ENCODE measurements at regions of chr7 and their contacts with region 1.

Region 1: DNA sequence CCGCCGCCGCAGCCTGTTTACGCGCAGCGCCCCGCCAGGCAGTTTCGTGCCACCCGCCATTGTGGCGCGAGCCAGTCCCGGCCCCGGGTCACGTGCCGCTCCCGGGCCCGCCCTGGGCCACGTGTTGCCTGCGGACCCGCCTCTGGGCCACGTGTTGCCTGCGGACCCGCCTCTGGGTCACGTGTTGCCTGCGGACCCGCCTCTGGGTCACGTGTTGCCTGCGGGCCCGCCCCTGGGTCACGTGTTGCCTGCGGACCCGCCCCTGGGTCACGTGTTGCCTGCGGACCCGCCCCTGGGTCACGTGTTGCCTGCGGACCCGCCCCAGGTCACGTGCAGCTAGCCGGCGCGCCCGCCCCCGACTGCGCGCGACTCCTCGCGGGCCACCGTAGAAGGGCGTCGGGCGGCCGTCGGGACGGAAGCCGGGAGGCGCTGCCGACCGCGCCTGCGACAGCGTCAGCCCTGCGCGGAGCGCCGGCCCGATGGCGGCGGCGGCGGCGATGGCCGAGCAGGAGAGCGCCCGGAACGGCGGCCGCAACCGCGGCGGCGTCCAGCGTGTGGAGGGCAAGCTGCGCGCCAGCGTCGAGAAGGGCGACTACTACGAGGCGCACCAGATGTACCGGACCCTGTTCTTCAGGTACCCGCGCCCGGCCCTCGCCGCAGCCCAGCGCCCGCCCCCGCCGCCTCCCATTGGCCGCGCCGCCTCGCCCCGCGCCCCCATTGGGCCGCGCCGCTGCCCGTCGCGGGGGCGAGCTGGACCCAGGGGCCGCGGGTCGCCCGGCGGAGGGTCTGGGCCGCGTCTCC is at the start of gene GET4:
- DNase-seq: peak; percentile 95 to 98 (median 96)
- ATAC-seq: peak; percentile 79
- H3K4me3 ChIP-seq: peak within 1 kb of the TSS; percentile 74 to 84
- H3K4me3 Mint-ChIP-seq: peak within 1 kb of the TSS; percentile 90
- H3K27ac ChIP-seq: peak within 1 kb of the TSS; percentile 72 to 89
- H3K27ac Mint-ChIP-seq: peak within 1 kb of the TSS; percentile 89
- H3K4me1 ChIP-seq: peaks cover 25% of the 10 kb centered on the region
- H3K4me1 Mint-ChIP-seq: peaks cover 34% of the 10 kb centered on the region
- H3K27me3 ChIP-seq: no peaks in the 10 kb centered on the region
- H3K27me3 Mint-ChIP-seq: no peaks in the 10 kb centered on the region
- CTCF ChIP-seq: no peak
- total RNA-seq, gene GET4: 75.4 to 83.1 TPM

Region 2: DNA sequence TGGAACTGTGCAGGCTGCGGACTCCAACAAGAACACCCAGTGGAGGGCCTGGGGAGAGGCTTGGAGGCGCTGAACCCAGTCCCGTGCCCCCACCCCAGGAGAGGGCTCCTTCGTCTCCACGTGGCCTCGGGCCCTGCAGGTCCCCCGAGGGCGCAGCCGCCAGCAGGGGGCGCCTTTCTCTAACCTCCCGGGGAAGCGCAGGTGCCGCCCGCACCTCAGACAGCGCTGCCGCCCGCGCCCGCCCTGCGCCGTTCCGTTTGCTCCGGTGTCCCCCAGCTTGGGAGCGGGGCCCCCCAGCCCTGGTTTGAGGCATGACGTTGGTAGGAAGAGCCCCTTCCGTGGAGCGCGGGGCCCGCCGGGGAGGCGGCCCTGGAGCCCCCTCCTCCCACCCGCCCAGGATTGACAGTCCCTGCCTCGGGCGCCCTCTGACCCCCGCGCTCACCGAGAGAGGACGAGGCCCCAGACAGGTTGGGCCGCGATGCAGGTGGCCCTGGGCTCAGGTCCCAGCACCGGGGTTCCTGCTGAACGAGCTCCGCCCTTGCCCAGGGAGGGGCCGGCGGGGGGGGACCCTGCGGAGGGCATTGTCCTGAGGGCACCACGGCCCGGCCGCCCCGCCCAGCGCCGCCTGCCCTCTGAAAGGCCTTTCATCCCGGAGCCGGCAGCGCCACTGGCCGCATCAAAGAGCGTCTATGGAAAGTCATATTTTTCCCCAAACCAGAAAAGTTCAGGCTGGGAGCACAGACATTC is 543.5 kb before region 1 on chr7:
- CTCF ChIA-PET with region 1: interaction called, 4 read pairs
- POLR2A ChIA-PET with region 1: no interaction called
- intact Hi-C with region 1: loop called in 1 of 2 experiments (anchors 1 kb)
- DNase-seq: peak; percentile 76 to 98 (median 88)
- ATAC-seq: peak; percentile 92
- H3K4me3 ChIP-seq: peak overlapping the region; percentile 34 to 52
- H3K4me3 Mint-ChIP-seq: peak overlapping the region; percentile 22
- H3K27ac ChIP-seq: no peak overlapping the region
- H3K27ac Mint-ChIP-seq: no peak overlapping the region
- H3K4me1 ChIP-seq: peaks cover 18% of the 10 kb centered on the region
- H3K4me1 Mint-ChIP-seq: peaks cover 11% of the 10 kb centered on the region
- H3K27me3 ChIP-seq: no peaks in the 10 kb centered on the region
- H3K27me3 Mint-ChIP-seq: no peaks in the 10 kb centered on the region
- CTCF ChIP-seq: peak; percentile 69

Region 3: GRCh38 chr7:726084-726853 is 150.1 kb before region 1 on chr7 and contains the start of gene DNAAF5:
- CTCF ChIA-PET with region 1: no interaction called
- POLR2A ChIA-PET with region 1: no interaction called
- intact Hi-C with region 1: loop called (anchors 1 kb)
- DNase-seq: peak; percentile 69 to 91 (median 86)
- ATAC-seq: peak; percentile 87
- H3K4me3 ChIP-seq: peak within 1 kb of the TSS; percentile 65 to 77
- H3K4me3 Mint-ChIP-seq: peak within 1 kb of the TSS; percentile 79
- H3K27ac ChIP-seq: peak within 1 kb of the TSS; percentile 65 to 67
- H3K27ac Mint-ChIP-seq: peak within 1 kb of the TSS; percentile 75
- H3K4me1 ChIP-seq: peaks cover 14% of the 10 kb centered on the region
- H3K4me1 Mint-ChIP-seq: peaks cover 17% of the 10 kb centered on the region
- H3K27me3 ChIP-seq: no peaks in the 10 kb centered on the region
- H3K27me3 Mint-ChIP-seq: no peaks in the 10 kb centered on the region
- CTCF ChIP-seq: no peak
- total RNA-seq, gene DNAAF5: 4.3 to 4.9 TPM

Region 4: GRCh38 chr7:831596-832166 is 44.7 kb before region 1 on chr7:
- CTCF ChIA-PET with region 1: interaction called, 3 read pairs
- POLR2A ChIA-PET with region 1: no interaction called
- intact Hi-C with region 1: loop called in 1 of 2 experiments (anchors 5 kb)
- DNase-seq: peak in 3 of 9 experiments; percentile 23 to 61 (median 30)
- ATAC-seq: peak; percentile 15
- H3K4me3 ChIP-seq: no peak overlapping the region
- H3K4me3 Mint-ChIP-seq: peak overlapping the region; percentile 75
- H3K27ac ChIP-seq: peak overlapping the region; percentile 66 to 75
- H3K27ac Mint-ChIP-seq: peak overlapping the region; percentile 92
- H3K4me1 ChIP-seq: peaks cover 27% of the 10 kb centered on the region
- H3K4me1 Mint-ChIP-seq: peaks cover 48% of the 10 kb centered on the region
- H3K27me3 ChIP-seq: no peaks in the 10 kb centered on the region
- H3K27me3 Mint-ChIP-seq: no peaks in the 10 kb centered on the region
- CTCF ChIP-seq: no peak

Region 5: DNA sequence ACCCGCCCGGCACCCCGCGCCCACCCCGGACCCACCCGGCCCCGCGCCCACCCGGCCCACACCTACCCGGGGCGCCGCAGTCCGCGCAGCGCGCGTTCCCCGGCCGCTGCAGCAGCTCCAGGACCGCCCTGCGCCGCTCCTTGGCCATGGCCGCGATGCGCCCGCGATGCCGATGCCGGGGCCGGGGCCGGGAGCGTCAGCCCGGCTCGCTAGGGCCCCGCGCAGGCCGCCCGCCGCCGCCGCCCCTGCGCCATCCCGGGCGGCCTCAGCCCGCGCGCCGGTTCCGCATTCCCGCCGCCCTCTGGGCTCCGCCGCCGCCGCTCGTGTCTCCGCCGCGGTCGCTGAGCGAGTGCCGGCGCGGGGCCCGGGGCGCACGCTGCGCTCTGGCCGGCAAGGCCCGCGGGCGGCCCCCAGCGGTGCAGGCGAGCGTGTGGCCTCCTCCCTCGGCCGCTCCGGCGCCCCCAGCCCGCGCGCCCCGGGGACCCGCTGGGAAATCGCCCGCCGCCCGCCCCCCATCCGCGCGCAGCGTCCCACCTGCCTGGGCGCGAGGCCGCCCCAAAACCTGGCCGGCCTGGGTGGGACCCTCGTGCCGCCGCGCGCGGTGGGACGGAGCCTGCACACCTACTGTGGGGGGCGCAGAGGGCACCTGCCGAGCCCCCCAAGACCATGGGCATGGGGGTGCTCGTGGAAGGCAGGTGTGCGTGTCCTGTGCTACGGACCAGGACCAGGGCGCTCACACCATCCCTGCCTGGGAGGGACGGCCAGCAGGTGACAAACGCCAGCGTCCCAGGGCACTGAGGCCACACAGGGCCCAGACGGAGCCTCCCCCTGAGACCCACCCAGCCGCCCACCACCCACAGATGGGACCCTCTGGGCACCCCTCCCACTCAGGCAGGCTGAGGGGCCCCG is 78.2 kb after region 1 on chr7 and contains the start of gene ADAP1:
- CTCF ChIA-PET with region 1: interaction called, 5 read pairs
- POLR2A ChIA-PET with region 1: interaction called, 4 read pairs
- intact Hi-C with region 1: loop called (anchors 1 to 2 kb)
- DNase-seq: peak in 8 of 9 experiments; percentile 45 to 87 (median 60)
- ATAC-seq: peak; percentile 83
- H3K4me3 ChIP-seq: peak within 1 kb of the TSS in 1 of 2 experiments; percentile 45
- H3K4me3 Mint-ChIP-seq: peak within 1 kb of the TSS; percentile 70
- H3K27ac ChIP-seq: no peak within 1 kb of the TSS
- H3K27ac Mint-ChIP-seq: peak within 1 kb of the TSS; percentile 70
- H3K4me1 ChIP-seq: no peaks in the 10 kb centered on the region
- H3K4me1 Mint-ChIP-seq: peaks cover 9% of the 10 kb centered on the region
- H3K27me3 ChIP-seq: no peaks in the 10 kb centered on the region
- H3K27me3 Mint-ChIP-seq: no peaks in the 10 kb centered on the region
- CTCF ChIP-seq: no peak
- total RNA-seq, gene ADAP1: 10.9 to 11.5 TPM

Region 6: GRCh38 chr7:1137510-1138167 is 261.3 kb after region 1 on chr7:
- CTCF ChIA-PET with region 1: no interaction called
- POLR2A ChIA-PET with region 1: no interaction called
- intact Hi-C with region 1: loop called in 1 of 2 experiments (anchors 1 kb)
- DNase-seq: no peak
- ATAC-seq: peak; percentile 62
- H3K4me3 ChIP-seq: peak overlapping the region; percentile 77 to 78
- H3K4me3 Mint-ChIP-seq: peak overlapping the region; percentile 90
- H3K27ac ChIP-seq: peak overlapping the region; percentile 81 to 91
- H3K27ac Mint-ChIP-seq: peak overlapping the region; percentile 88
- H3K4me1 ChIP-seq: peaks cover 14% of the 10 kb centered on the region
- H3K4me1 Mint-ChIP-seq: peaks cover 17% of the 10 kb centered on the region
- H3K27me3 ChIP-seq: no peaks in the 10 kb centered on the region
- H3K27me3 Mint-ChIP-seq: no peaks in the 10 kb centered on the region
- CTCF ChIP-seq: no peak

Region 7: DNA sequence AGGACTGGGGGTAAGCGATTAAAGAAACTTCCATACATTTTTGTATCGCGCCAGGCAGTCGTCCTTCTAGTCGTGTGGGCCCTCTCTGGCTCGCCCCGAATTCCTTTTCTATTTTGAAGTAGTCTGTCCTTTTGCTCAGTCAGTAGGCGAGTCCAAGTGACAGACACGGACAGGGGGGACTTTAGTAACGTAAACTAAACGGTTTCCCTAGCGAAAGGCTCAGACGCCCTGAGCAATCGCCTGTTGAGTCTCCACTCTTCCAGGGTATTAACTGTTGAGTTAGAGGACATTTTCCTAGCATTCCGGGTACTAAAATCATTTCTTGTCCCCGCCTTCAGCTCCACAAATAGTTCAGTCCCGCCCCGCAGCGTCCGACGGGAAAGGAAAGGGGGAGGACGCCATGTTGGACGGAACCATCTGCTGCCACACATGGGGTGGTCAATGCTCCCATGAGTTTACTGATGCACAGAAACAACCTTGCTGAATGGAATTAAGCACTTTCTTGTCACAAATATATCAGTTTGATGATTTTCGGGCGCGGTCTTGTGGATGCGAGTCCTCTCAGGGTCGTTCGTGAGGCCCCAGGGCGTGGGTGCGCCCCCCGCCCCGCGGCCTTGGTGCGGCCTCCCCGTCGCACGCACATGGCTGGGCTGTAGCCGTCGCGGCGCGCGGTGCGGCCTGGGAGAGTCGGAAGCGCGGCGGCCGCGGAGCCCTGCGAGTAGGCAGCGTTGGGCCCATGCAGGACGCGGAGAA is 1478.0 kb after region 1 on chr7 and contains the start of gene EIF3B:
- CTCF ChIA-PET with region 1: no interaction called
- POLR2A ChIA-PET with region 1: no interaction called
- intact Hi-C with region 1: loop called in 1 of 2 experiments (anchors 5 kb)
- DNase-seq: peak; percentile 80 to 97 (median 90)
- ATAC-seq: peak; percentile 84
- H3K4me3 ChIP-seq: peak within 1 kb of the TSS; percentile 72 to 74
- H3K4me3 Mint-ChIP-seq: peak within 1 kb of the TSS; percentile 88
- H3K27ac ChIP-seq: peak within 1 kb of the TSS; percentile 99
- H3K27ac Mint-ChIP-seq: peak within 1 kb of the TSS; percentile 99
- H3K4me1 ChIP-seq: peaks cover 45% of the 10 kb centered on the region
- H3K4me1 Mint-ChIP-seq: peaks cover 40% of the 10 kb centered on the region
- H3K27me3 ChIP-seq: no peaks in the 10 kb centered on the region
- H3K27me3 Mint-ChIP-seq: no peaks in the 10 kb centered on the region
- CTCF ChIP-seq: no peak
- total RNA-seq, gene EIF3B: 234 to 239 TPM